Motor neuron (in vitro differentiated cells): ENCODE measurements at regions of chr18 and their contacts with region 1.

Region 1: GRCh38 chr18:26642440-26643348 is 94.3 kb upstream of the KCTD1 start:
- ATAC-seq: no peak
- H3K4me3 ChIP-seq: no peak overlapping the region
- H3K27ac ChIP-seq: no peak overlapping the region
- H3K4me1 ChIP-seq: no peaks in the 10 kb centered on the region

Region 2: DNA sequence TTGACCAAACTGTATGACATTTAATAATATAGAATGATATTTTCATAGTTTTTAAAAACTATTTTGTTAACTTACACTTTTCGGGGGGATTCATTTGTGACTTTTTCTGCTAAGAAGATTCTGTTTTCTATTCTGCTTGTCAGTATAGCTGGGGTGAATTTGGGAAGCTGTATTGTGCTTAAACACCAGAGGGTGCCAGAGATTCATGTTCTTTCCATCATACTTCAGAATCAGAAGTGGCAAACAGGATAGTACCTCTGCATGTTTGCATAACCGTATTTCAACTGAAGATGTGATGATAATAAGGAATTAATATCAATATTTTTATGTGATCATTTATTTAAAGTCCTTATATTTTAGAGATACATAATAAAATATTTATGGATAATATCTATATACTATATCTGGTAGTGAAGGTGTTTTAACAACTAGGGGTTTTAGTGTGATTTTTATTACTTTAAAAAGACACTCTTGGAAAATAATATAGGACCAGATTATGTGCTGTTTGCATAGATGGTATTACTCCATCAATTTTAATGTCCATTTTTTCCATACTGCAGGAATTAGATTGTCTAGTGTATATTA is 335.4 kb before region 1 on chr18:
- in situ Hi-C with region 1: loop called in 2 of 9 experiments (anchors 25 kb)
- ATAC-seq: peak in 5 of 8 experiments; percentile 41 to 77 (median 64)
- H3K4me3 ChIP-seq: no peak overlapping the region
- H3K27ac ChIP-seq: no peak overlapping the region
- H3K4me1 ChIP-seq: peaks cover 2 to 3% of the 10 kb centered on the region in 2 donors

Region 3: DNA sequence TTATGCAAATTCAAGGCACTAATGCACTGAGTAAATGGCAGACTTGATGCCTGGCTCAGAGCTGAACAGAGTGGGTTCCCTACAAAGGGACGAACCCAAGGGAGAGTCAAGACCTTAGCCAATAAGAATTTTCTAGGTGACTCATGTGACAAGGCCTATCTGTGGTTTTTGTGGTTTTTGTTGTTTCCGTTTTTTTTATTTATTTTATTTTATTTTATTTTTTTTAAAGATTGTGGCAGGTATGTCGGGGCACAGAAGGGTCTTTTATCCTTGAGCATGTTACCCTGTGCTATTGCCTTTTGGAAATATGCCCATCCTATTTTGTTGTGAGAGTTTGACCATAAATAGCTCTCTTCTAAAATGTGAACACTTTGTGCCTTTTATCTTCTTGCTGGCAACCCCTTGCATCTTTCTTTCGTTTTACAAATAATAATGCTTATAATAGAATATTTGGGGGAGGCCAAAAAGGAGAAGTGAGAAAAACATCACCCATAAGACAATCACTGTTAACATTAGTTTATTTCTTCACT is 336.2 kb after region 1 on chr18:
- in situ Hi-C with region 1: no loop called
- ATAC-seq: no peak
- H3K4me3 ChIP-seq: no peak overlapping the region
- H3K27ac ChIP-seq: no peak overlapping the region
- H3K4me1 ChIP-seq: peaks cover 0 to 4% of the 10 kb centered on the region in 2 donors